ENCODE measurements at regions of chr2 and their contacts with region 1.

Region 1: DNA sequence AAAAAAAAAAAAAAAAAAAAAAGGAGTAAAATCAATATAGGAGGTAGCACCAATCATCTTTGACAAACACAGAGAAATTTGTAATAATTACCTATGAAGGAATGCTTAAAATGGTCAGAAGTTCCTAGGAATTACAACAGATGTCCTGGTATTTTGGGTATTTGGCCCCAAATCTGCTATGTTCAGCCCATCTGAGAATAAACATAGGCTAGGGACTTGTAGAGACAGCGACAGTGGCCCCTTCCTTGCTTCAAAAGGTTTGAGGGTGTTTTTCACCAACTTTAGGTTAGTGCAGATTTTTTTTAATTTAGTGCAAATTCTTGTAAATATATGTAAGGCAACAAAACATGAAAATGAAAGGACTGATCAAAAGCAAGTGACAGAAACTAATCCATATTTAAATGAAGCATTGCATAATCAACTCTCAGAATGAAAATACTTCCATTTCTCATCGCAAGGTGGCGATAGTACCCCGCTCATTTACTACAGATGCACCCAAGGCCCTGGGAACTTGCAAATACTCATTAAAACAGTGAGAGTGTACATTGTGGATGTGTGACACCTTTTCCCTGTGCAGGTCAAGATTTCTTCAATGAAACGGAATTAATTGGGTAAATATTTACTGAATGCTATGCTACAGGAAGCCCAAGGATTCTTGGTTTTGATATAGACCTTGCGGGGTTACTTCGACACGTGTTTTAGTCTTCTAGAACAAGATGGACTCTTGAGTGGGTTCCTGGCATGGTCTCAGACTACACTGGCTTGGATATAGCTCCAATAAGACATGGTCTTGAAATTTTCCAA is 44.6 kb downstream of the FAM124B start:
- DNase-seq: peak in 1 of 2 donors; percentile 52
- ATAC-seq: peak in 7 of 8 donors; percentile 46 to 75 (median 71)
- H3K4me3 ChIP-seq: no peak overlapping the region
- H3K27ac ChIP-seq: no peak overlapping the region
- H3K4me1 ChIP-seq: no peaks in the 10 kb centered on the region
- H3K27me3 ChIP-seq: peaks cover 0 to 7% (median 0%) of the 10 kb centered on the region in 7 donors
- CTCF ChIP-seq: peak; percentile 66 to 89 (median 84)

Region 2: DNA sequence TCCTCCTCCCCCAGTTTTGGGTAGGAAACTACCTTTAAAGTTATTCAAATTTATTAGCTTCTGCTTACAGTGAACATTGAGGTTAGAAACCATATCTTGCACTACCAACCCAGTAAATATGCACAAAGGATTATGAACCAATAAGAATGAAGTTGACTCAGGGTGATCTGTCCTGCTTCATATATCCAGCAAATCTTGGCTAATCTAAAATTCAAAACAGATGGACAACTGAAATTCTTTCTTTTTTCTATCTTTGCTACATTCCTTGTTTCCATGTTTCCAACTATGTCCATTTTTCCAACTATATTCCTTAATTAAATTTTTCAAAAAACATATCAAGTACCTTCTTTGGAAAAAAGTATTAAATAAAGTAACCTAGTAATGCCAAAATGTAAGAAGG is 104.7 kb before region 1 on chr2:
- intact Hi-C with region 1: no loop called
- DNase-seq: no peak
- ATAC-seq: no peak
- H3K4me3 ChIP-seq: no peak overlapping the region
- H3K27ac ChIP-seq: no peak overlapping the region
- H3K4me1 ChIP-seq: no peaks in the 10 kb centered on the region
- H3K27me3 ChIP-seq: no peaks in the 10 kb centered on the region
- CTCF ChIP-seq: no peak

Region 3: DNA sequence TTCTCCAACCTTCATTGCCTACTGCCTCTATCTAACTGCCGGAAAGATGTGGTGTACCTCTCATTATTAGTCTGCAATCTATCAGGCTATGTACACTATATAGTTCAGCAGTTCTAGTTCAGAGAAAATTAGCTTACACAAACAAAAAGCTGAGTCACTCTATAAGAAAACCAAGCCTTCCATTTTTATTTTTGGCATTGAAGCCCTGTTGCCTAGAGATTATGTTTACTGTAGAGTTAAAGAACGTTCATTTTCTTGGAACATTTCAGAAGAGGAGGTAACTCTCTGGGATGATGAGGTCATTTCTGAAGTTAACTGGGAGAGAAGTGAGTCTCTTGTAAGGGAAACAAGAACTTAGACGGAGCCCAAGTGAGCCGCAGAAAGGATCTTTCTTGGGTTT is 88.9 kb before region 1 on chr2:
- intact Hi-C with region 1: no loop called
- DNase-seq: no peak
- ATAC-seq: peak in 2 of 8 donors; percentile 25 to 35
- H3K4me3 ChIP-seq: no peak overlapping the region
- H3K27ac ChIP-seq: peak overlapping the region in 1 of 10 donors; percentile 29
- H3K4me1 ChIP-seq: peaks cover 0 to 7% (median 0%) of the 10 kb centered on the region in 9 donors
- H3K27me3 ChIP-seq: peaks cover 0 to 4% (median 0%) of the 10 kb centered on the region in 7 donors
- CTCF ChIP-seq: no peak

Region 4: GRCh38 chr2:224293976-224294375 is 63.3 kb before region 1 on chr2:
- intact Hi-C with region 1: no loop called
- DNase-seq: no peak
- ATAC-seq: no peak
- H3K4me3 ChIP-seq: no peak overlapping the region
- H3K27ac ChIP-seq: no peak overlapping the region
- H3K4me1 ChIP-seq: no peaks in the 10 kb centered on the region
- H3K27me3 ChIP-seq: peaks cover 0 to 40% (median 21%) of the 10 kb centered on the region in 7 donors
- CTCF ChIP-seq: no peak

Region 5: GRCh38 chr2:224442071-224442967 is 85.0 kb after region 1 on chr2:
- intact Hi-C with region 1: loop called in 6 of 10 experiments (anchors 5 to 10 kb)
- DNase-seq: peak in 1 of 2 donors; percentile 33
- ATAC-seq: peak in 5 of 8 donors; percentile 22 to 67 (median 64)
- H3K4me3 ChIP-seq: peak overlapping the region; percentile 41 to 63 (median 58)
- H3K27ac ChIP-seq: peak overlapping the region in 3 of 10 donors; percentile 8 to 64 (median 53)
- H3K4me1 ChIP-seq: peaks cover 0 to 14% (median 9%) of the 10 kb centered on the region in 9 donors
- H3K27me3 ChIP-seq: peaks cover 0 to 22% (median 10%) of the 10 kb centered on the region in 7 donors
- CTCF ChIP-seq: no peak

Region 6: GRCh38 chr2:224449212-224450147 is 92.2 kb after region 1 on chr2:
- intact Hi-C with region 1: loop called in 9 of 10 experiments (anchors 2 to 10 kb)
- DNase-seq: no peak
- ATAC-seq: no peak
- H3K4me3 ChIP-seq: no peak overlapping the region
- H3K27ac ChIP-seq: no peak overlapping the region
- H3K4me1 ChIP-seq: no peaks in the 10 kb centered on the region
- H3K27me3 ChIP-seq: no peaks in the 10 kb centered on the region
- CTCF ChIP-seq: peak; percentile 20 to 76 (median 60)

Region 7: GRCh38 chr2:224650815-224651439 is 293.6 kb after region 1 on chr2:
- intact Hi-C with region 1: loop called (anchors 1 to 5 kb)
- DNase-seq: peak in 1 of 2 donors; percentile 10
- ATAC-seq: peak in 6 of 8 donors; percentile 50 to 70 (median 60)
- H3K4me3 ChIP-seq: no peak overlapping the region
- H3K27ac ChIP-seq: no peak overlapping the region
- H3K4me1 ChIP-seq: no peaks in the 10 kb centered on the region
- H3K27me3 ChIP-seq: peaks cover 0 to 5% (median 0%) of the 10 kb centered on the region in 7 donors
- CTCF ChIP-seq: peak; percentile 52 to 88 (median 81)

Region 8: DNA sequence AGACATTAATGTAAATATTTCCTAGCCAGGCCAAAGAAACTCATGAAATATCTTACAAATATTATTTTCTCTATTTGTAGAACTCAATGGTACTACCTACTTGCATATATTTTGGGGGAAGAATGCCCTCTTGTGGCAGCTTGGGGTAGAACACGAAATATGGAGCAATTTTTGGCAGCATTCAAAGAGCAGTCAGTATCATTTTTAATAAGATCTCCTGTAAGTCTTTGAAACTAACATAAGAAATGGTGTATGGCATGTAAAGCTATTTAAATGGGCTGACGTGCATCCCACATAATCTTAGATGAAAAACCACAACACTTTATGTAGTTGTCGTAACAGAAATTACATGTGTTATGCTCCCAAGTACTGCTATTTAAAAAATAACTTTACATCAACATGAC is 421.2 kb after region 1 on chr2:
- intact Hi-C with region 1: loop called (anchors 2 to 10 kb)
- DNase-seq: peak in 1 of 2 donors; percentile 21
- ATAC-seq: peak in 1 of 8 donors; percentile 49
- H3K4me3 ChIP-seq: no peak overlapping the region
- H3K27ac ChIP-seq: no peak overlapping the region
- H3K4me1 ChIP-seq: no peaks in the 10 kb centered on the region
- H3K27me3 ChIP-seq: no peaks in the 10 kb centered on the region
- CTCF ChIP-seq: peak; percentile 62 to 87 (median 79)

Region 9: GRCh38 chr2:225002039-225002655 is 644.8 kb after region 1 on chr2:
- intact Hi-C with region 1: loop called in 2 of 10 experiments (anchors 10 kb)
- DNase-seq: peak in 1 of 2 donors; percentile 53
- ATAC-seq: peak in 5 of 8 donors; percentile 28 to 61 (median 42)
- H3K4me3 ChIP-seq: no peak overlapping the region
- H3K27ac ChIP-seq: peak overlapping the region in 1 of 10 donors; percentile 26
- H3K4me1 ChIP-seq: peaks cover 0 to 13% (median 0%) of the 10 kb centered on the region in 9 donors
- H3K27me3 ChIP-seq: no peaks in the 10 kb centered on the region
- CTCF ChIP-seq: peak; percentile 26 to 74 (median 60)

Region 10: DNA sequence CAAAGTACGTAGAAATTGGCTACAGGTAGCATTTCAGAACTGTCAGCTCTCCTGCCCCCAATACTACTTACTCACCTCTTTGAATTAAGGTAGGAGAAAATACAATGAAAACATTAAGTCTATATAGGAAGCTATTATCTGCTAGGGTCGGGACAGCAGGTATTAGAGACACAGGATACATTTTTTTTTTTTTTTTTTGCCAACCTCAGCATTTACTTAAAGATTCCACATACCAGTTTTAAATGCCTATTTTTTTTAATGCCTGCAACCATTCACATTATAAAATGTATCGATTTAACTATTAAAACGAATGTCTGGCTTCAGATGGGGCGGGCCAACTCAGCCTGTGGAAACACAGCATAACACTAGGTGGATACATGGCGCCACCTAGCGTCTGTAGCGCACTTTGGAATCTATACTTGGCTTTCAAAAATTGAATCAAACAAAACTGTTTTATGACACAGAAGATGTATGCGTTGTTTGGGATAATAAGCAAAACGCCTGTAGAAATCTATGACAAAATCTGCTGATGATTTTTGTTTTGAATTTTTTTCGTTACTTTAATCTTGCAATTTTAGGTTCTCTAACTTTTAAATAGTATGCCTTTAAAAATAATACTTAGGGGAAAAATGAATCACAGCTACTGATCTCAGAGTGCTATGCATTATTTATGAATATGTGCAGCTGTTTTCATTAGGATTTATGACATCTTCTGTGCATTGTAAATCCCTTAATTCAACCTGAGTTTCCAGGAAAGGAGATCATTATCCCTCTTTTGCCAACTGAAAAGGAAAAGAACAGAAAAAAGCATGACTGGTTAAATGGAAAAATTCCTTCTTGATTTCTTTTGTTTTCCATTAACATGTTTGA is 1303.2 kb after region 1 on chr2:
- intact Hi-C with region 1: loop called in 1 of 10 experiments (anchors 5 kb)
- DNase-seq: peak; percentile 54 to 61
- ATAC-seq: no peak
- H3K4me3 ChIP-seq: no peak overlapping the region
- H3K27ac ChIP-seq: no peak overlapping the region
- H3K4me1 ChIP-seq: no peaks in the 10 kb centered on the region
- H3K27me3 ChIP-seq: peaks cover 0 to 33% (median 7%) of the 10 kb centered on the region in 7 donors
- CTCF ChIP-seq: peak; percentile 67 to 87 (median 82)